GM12878 (cell line): ENCODE measurements at regions of chr5 and their contacts with region 1.

Region 1: DNA sequence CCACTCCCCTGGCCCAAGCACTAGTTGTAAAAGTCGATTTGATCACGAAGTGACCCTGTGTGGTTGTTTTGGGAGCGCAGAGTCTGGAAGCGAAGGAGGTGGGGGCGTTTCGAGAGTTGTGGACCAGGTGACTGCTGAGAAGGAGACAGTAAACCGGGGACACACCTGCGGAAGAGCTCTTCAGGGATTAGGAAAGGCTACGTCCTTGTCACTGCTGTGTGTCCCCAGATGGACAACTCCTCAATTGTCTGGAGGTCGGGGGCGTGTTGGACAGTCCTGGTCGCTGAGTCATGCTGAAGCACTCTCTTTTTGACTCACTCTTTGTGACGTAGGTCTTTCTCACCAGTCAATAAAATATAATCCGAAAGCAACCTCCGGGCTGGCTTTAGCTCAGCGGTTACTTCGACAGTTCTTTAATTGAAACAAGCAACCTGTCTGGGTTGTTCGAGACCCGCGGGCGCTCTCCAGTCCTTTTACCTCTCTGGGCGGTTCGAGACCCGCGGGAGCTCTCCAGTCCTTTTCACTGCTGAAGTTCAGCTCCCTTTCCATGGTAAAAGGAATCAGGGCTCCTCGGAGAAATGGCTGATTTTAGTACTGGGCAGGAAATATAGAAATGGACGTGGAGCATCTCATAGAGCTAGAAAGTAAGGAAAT is 10.8 kb downstream of the ZMAT2 start:
- DNase-seq: peak; percentile 99
- ATAC-seq: peak; percentile 93
- H3K4me3 ChIP-seq: peak overlapping the region; percentile 66
- H3K27ac ChIP-seq: peak overlapping the region; percentile 67
- H3K4me1 ChIP-seq: no peaks in the 10 kb centered on the region
- H3K27me3 ChIP-seq: no peaks in the 10 kb centered on the region
- CTCF ChIP-seq: no peak
- EP300 ChIP-seq: peak; percentile 78 to 85; a peak in 3 of 4 replicates
- POLR2A ChIP-seq: peak; percentile 72
- RAD21 ChIP-seq: no peak

Region 2: GRCh38 chr5:140690941-140691924 is 19.8 kb before region 1 on chr5 and contains the starts of genes HARS1 and HARS2:
- CTCF ChIA-PET with region 1: interaction called, 5 read pairs
- POLR2A ChIA-PET with region 1: interaction called, 8 read pairs
- RAD21 ChIA-PET with region 1: interaction called, 7 read pairs
- SMC1A ChIA-PET with region 1: interaction called, 16 read pairs
- in situ Hi-C with region 1: no loop called
- intact Hi-C with region 1: loop called (anchors 1 kb)
- DNase-seq: peak; percentile 77
- ATAC-seq: peak; percentile 96
- H3K4me3 ChIP-seq: peak within 1 kb of the TSS; percentile 89
- H3K27ac ChIP-seq: peak within 1 kb of the TSS; percentile 74
- H3K4me1 ChIP-seq: peaks cover 4% of the 10 kb centered on the region; the same call in 1 of the 2 replicates
- H3K27me3 ChIP-seq: no peaks in the 10 kb centered on the region
- CTCF ChIP-seq: no peak
- EP300 ChIP-seq: no peak
- POLR2A ChIP-seq: peak; percentile 97
- RAD21 ChIP-seq: no peak
- polyA plus RNA-seq, gene HARS1: 12.0 to 17.3 TPM
- polyA plus RNA-seq, gene HARS2: 9.3 to 13.1 TPM

Region 3: GRCh38 chr5:140700177-140701144 is 10.6 kb before region 1 on chr5 and contains the start of gene ZMAT2:
- CTCF ChIA-PET with region 1: interaction called, 13 read pairs
- POLR2A ChIA-PET with region 1: interaction called, 8 read pairs
- RAD21 ChIA-PET with region 1: interaction called, 18 read pairs
- SMC1A ChIA-PET with region 1: interaction called, 9 read pairs
- in situ Hi-C with region 1: no loop called
- intact Hi-C with region 1: no loop called
- DNase-seq: peak; percentile 96
- ATAC-seq: peak; percentile 100
- H3K4me3 ChIP-seq: peak within 1 kb of the TSS; percentile 92
- H3K27ac ChIP-seq: peak within 1 kb of the TSS; percentile 38; the same call in 1 of the 2 replicates
- H3K4me1 ChIP-seq: peaks cover 7% of the 10 kb centered on the region; the same call in 1 of the 2 replicates
- H3K27me3 ChIP-seq: no peaks in the 10 kb centered on the region
- CTCF ChIP-seq: no peak
- EP300 ChIP-seq: no peak
- POLR2A ChIP-seq: peak; percentile 88
- RAD21 ChIP-seq: no peak
- polyA plus RNA-seq, gene ZMAT2: 41.5 to 41.8 TPM

Region 4: GRCh38 chr5:140821375-140822280 is 110.6 kb after region 1 on chr5 and contains the start of gene PCDHA5:
- CTCF ChIA-PET with region 1: no interaction called
- POLR2A ChIA-PET with region 1: no interaction called
- RAD21 ChIA-PET with region 1: no interaction called
- SMC1A ChIA-PET with region 1: no interaction called
- in situ Hi-C with region 1: no loop called
- intact Hi-C with region 1: no loop called
- DNase-seq: no peak
- ATAC-seq: no peak
- H3K4me3 ChIP-seq: no peak within 1 kb of the TSS
- H3K27ac ChIP-seq: no peak within 1 kb of the TSS
- H3K4me1 ChIP-seq: no peaks in the 10 kb centered on the region
- H3K27me3 ChIP-seq: no peaks in the 10 kb centered on the region
- CTCF ChIP-seq: peak in 2 of 3 experiments; percentile 31 to 39; a peak in 4 of 6 replicates
- EP300 ChIP-seq: no peak
- POLR2A ChIP-seq: no peak
- RAD21 ChIP-seq: no peak
- polyA plus RNA-seq, gene PCDHA5: not detected